Left colon (tissue), 2 donors: ENCODE measurements at regions of chr7 and their contacts with region 1.

Region 1: GRCh38 chr7:86904949-86905834 is 154.3 kb downstream of the ELAPOR2 start:
- DNase-seq: peak in 1 of 2 donors; percentile 5
- ATAC-seq: peak; percentile 54

Region 2: GRCh38 chr7:85890244-85890811 is 1014.9 kb before region 1 on chr7:
- intact Hi-C with region 1: loop called in 1 of 2 experiments (anchors 5 kb)
- DNase-seq: no peak
- ATAC-seq: no peak

Region 3: GRCh38 chr7:87510411-87510875 is 605.3 kb after region 1 on chr7:
- intact Hi-C with region 1: no loop called
- DNase-seq: no peak
- ATAC-seq: no peak